ENCODE measurements at regions of chr14 and their contacts with region 1.

Region 1: GRCh38 chr14:104976198-104977007 is 1.8 kb downstream of the AHNAK2 start:
- DNase-seq: peak; percentile 92
- H3K4me3 ChIP-seq: peak overlapping the region; percentile 71 to 81
- H3K27ac ChIP-seq: no peak overlapping the region
- H3K4me1 ChIP-seq: peaks cover 41 to 68% of the 10 kb centered on the region in 2 experiments; a peak in 3 of 4 replicates
- H3K27me3 ChIP-seq: no peaks in the 10 kb centered on the region
- CTCF ChIP-seq: peak; percentile 80
- EP300 ChIP-seq: no peak
- RAD21 ChIP-seq: peak; percentile 92

Region 2: GRCh38 chr14:104707608-104708595 is 268.5 kb before region 1 on chr14:
- CTCF ChIA-PET with region 1: no interaction called
- POLR2A ChIA-PET with region 1: no interaction called
- DNase-seq: no peak
- H3K4me3 ChIP-seq: no peak overlapping the region
- H3K27ac ChIP-seq: no peak overlapping the region; a peak in 1 of 4 replicates
- H3K4me1 ChIP-seq: no peaks in the 10 kb centered on the region; a peak in 1 of 4 replicates
- H3K27me3 ChIP-seq: no peaks in the 10 kb centered on the region
- CTCF ChIP-seq: no peak
- EP300 ChIP-seq: no peak
- RAD21 ChIP-seq: no peak

Region 3: GRCh38 chr14:104932676-104933631 is 43.4 kb before region 1 on chr14:
- CTCF ChIA-PET with region 1: interaction called, 17 read pairs
- POLR2A ChIA-PET with region 1: no interaction called
- DNase-seq: peak; percentile 97
- H3K4me3 ChIP-seq: peak overlapping the region; percentile 53 to 62
- H3K27ac ChIP-seq: no peak overlapping the region
- H3K4me1 ChIP-seq: peaks cover 0 to 5% of the 10 kb centered on the region in 2 experiments; a peak in 1 of 4 replicates
- H3K27me3 ChIP-seq: no peaks in the 10 kb centered on the region
- CTCF ChIP-seq: peak; percentile 48
- EP300 ChIP-seq: 0 out of 4 replicates have a peak, but pooled peaks of 1 of the 2 experiments have one; percentile 11
- RAD21 ChIP-seq: peak; percentile 31

Region 4: GRCh38 chr14:105005929-105006830 is 29.8 kb after region 1 on chr14:
- CTCF ChIA-PET with region 1: interaction called, 10 read pairs
- POLR2A ChIA-PET with region 1: no interaction called
- DNase-seq: no peak
- H3K4me3 ChIP-seq: no peak overlapping the region
- H3K27ac ChIP-seq: no peak overlapping the region
- H3K4me1 ChIP-seq: peaks cover 0 to 3% of the 10 kb centered on the region in 2 experiments; a peak in 1 of 4 replicates
- H3K27me3 ChIP-seq: no peaks in the 10 kb centered on the region
- CTCF ChIP-seq: no peak
- EP300 ChIP-seq: no peak
- RAD21 ChIP-seq: no peak

Region 5: GRCh38 chr14:105020815-105021655 is 44.6 kb after region 1 on chr14 and contains the start of gene CDCA4:
- CTCF ChIA-PET with region 1: interaction called, 20 read pairs
- POLR2A ChIA-PET with region 1: no interaction called
- DNase-seq: peak; percentile 100
- H3K4me3 ChIP-seq: peak within 1 kb of the TSS; percentile 75 to 77
- H3K27ac ChIP-seq: peak within 1 kb of the TSS; percentile 89 to 99
- H3K4me1 ChIP-seq: peaks cover 22 to 51% of the 10 kb centered on the region in 2 experiments; a peak in 2 of 4 replicates
- H3K27me3 ChIP-seq: no peaks in the 10 kb centered on the region
- CTCF ChIP-seq: no peak
- EP300 ChIP-seq: 0 out of 4 replicates have a peak, but pooled peaks of 1 of the 2 experiments have one; percentile 7
- RAD21 ChIP-seq: no peak
- polyA plus RNA-seq, gene CDCA4: 23.7 and 26.8 TPM in 2 replicates

Region 6: GRCh38 chr14:105053996-105054395 is 77.6 kb after region 1 on chr14:
- CTCF ChIA-PET with region 1: interaction called, 27 read pairs
- POLR2A ChIA-PET with region 1: no interaction called
- DNase-seq: peak; percentile 14
- H3K4me3 ChIP-seq: no peak overlapping the region
- H3K27ac ChIP-seq: no peak overlapping the region
- H3K4me1 ChIP-seq: peaks cover 0 to 2% of the 10 kb centered on the region in 2 experiments; a peak in 1 of 4 replicates
- H3K27me3 ChIP-seq: no peaks in the 10 kb centered on the region
- CTCF ChIP-seq: no peak
- EP300 ChIP-seq: no peak
- RAD21 ChIP-seq: no peak

Region 7: GRCh38 chr14:105075379-105076295 is 99.2 kb after region 1 on chr14:
- CTCF ChIA-PET with region 1: interaction called, 12 read pairs
- POLR2A ChIA-PET with region 1: no interaction called
- DNase-seq: peak; percentile 73
- H3K4me3 ChIP-seq: no peak overlapping the region
- H3K27ac ChIP-seq: no peak overlapping the region
- H3K4me1 ChIP-seq: peaks cover 0 to 8% of the 10 kb centered on the region in 2 experiments; a peak in 1 of 4 replicates
- H3K27me3 ChIP-seq: no peaks in the 10 kb centered on the region
- CTCF ChIP-seq: no peak
- EP300 ChIP-seq: no peak
- RAD21 ChIP-seq: no peak

Region 8: DNA sequence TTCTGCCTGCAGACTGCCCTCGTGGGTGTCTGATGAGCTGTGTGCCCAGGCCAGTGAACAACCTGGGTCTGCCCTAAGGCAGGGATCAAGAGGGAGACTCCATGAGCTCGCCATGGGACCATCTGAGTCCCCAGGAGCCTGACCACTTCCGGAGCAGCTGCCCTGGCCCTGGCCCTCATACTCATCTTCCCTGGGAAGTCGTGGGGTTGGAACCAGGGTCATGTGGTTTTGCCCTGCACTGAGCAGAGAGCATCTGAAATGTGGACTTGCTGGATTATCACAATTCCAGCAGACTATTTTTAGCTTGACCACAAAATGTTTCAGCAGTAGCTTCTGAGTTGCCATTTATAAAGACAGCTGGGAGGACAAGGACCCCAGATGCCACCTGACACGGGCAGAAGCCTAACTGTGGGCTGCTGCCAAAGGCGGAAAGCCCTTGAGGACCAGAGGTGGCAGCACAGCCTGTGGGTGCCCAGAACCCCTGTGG is 278.7 kb after region 1 on chr14:
- CTCF ChIA-PET with region 1: no interaction called
- POLR2A ChIA-PET with region 1: no interaction called
- DNase-seq: no peak
- H3K4me3 ChIP-seq: no peak overlapping the region
- H3K27ac ChIP-seq: peak overlapping the region; percentile 3 to 34; a peak in 1 of 4 replicates
- H3K4me1 ChIP-seq: no peaks in the 10 kb centered on the region; a peak in 1 of 4 replicates
- H3K27me3 ChIP-seq: no peaks in the 10 kb centered on the region
- CTCF ChIP-seq: no peak
- EP300 ChIP-seq: no peak
- RAD21 ChIP-seq: no peak